Gastrocnemius medialis (tissue), 4 donors: ENCODE measurements at regions of chr1 and their contacts with region 1.

Region 1: GRCh38 chr1:50978144-50978851 is 8.3 kb downstream of the CDKN2C start:
- DNase-seq: peak; percentile 71 to 84
- ATAC-seq: peak; percentile 79 to 82
- H3K4me3 ChIP-seq: peak overlapping the region; percentile 73 to 94 (median 88)
- H3K27ac ChIP-seq: peak overlapping the region; percentile 92 to 100 (median 98)
- H3K4me1 ChIP-seq: peaks cover 11 to 25% of the 10 kb centered on the region in 2 donors
- H3K27me3 ChIP-seq: no peaks in the 10 kb centered on the region
- CTCF ChIP-seq: no peak
- POLR2A ChIP-seq: peak; percentile 51 to 58

Region 2: DNA sequence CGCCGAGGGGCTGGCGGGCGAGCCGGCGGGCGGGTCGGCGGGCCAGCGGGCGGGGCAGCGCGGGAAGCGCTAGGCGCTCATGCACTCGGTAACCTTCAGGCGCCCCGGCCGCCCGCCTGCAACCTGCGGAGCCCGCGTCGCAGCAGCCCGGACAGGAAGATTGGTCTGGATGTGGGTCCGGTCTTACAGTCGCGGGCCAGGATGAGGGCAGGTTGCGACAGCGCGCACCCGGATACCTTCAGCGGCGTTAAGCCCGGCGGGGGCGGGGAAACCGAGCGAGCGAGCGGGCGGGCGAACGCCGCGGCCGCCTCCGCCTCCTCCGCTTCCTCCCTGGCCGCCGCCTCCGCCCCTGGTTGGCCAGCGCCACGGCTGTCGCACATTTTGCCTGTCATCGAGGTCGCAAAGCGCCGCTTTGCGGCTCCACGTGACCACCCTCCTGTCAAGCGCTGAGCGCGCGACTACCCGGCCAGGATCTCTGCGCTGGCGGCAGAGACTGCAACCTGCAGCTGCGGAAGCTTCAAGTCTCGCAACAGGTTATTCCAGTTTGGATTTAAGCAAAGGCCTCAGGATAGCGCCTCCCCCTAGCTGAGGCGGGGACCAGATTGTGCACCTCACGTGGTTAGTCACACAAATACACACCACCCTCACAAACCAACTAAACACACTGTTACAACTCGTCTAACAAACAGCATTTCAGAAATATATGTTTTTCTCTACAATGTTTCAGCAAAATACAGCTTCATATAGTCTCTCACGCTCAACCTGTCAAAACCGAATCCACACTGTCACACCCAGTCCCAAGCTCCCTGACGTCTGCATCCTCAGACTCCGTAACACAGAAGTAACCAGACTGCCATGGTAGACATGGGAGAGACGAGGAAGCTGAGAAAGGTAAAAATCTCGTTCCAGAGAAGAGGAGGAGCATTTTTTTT is 18.1 kb before region 1 on chr1 and contains the start of gene FAF1:
- in situ Hi-C with region 1: no loop called
- intact Hi-C with region 1: loop called (anchors 1 kb)
- DNase-seq: peak; percentile 94 to 98
- ATAC-seq: peak; percentile 92 to 94
- H3K4me3 ChIP-seq: peak within 1 kb of the TSS; percentile 62 to 89 (median 78)
- H3K27ac ChIP-seq: peak within 1 kb of the TSS; percentile 90 to 97 (median 94)
- H3K4me1 ChIP-seq: peaks cover 7 to 31% of the 10 kb centered on the region in 2 donors
- H3K27me3 ChIP-seq: no peaks in the 10 kb centered on the region
- CTCF ChIP-seq: peak; percentile 3 to 64 (median 50)
- POLR2A ChIP-seq: peak; percentile 92 to 96
- total RNA-seq, gene FAF1: 72.0 to 107 (median 92.0) TPM